ENCODE measurements at regions of chr2 and their contacts with region 1.

Region 1: DNA sequence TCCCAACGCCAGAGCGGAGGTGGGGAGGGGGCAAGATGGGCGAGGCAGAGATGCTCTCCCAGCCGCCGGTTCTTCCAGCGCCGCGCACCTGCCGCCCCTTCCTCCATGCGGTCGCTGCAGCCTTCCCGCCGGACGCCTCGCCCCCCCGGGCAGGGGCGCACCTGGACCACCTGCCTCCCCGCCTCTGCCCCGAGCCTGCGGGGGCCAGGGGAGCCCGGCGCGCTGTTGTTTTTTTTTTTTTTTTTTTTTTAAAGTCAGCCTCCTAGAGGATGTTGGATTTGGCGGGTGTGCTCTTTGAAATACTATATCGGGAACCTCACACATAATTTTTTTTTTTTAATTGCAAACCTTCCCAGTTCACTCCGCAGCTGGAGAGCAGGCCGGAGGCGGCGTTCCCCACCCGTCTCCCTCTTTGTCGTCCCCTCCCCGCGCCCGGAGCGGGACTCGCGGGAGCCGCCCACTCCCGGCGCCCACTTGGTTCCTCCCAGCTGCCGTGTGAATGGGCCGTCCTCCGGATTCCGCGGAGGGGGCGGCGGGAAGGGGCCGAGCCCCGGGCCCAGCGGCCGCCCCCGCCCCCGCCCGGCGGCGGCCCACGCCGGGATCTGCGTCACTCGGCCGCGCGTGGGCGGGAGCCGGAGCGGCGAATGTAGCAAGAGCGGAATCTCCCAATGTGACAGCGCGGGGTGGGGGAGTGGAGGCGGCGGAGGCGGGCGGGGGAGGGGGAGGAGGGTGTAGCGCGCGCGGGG is 421 bp upstream of the NAB1 start:
- DNase-seq: peak; percentile 96
- ATAC-seq: peak; percentile 96

Region 2: GRCh38 chr2:190578158-190579057 is 70.1 kb before region 1 on chr2:
- intact Hi-C with region 1: loop called (anchors 5 kb)
- DNase-seq: no peak
- ATAC-seq: peak; percentile 64

Region 3: DNA sequence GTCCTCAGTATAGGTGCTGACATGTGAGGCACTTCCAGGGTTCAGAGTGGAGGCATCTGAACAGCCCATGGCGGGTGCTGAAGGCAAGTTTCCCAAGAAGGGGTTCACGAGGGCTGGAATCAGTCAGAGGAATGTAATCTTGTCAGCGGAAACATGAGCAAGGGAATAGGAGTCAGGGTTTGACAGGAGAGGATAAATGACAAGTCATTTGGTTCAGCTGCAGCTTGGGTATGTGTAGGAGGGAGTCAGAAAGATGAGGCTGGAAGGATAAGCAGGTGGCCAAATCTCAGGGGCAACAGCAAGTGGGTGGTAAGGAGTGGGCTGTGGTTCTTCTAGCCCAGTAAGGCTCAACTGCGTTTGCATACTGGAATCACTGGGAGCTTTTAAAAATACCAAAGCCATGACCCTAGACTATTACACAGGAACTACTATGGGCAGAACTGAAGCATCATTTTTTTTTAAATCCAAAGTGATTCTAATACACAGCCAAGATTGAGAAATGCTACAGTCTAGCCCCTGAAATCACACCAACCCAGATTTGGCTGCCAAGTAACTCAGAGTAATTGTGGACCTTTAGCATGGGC is 41.4 kb before region 1 on chr2:
- intact Hi-C with region 1: no loop called
- DNase-seq: no peak
- ATAC-seq: peak; percentile 57

Region 4: DNA sequence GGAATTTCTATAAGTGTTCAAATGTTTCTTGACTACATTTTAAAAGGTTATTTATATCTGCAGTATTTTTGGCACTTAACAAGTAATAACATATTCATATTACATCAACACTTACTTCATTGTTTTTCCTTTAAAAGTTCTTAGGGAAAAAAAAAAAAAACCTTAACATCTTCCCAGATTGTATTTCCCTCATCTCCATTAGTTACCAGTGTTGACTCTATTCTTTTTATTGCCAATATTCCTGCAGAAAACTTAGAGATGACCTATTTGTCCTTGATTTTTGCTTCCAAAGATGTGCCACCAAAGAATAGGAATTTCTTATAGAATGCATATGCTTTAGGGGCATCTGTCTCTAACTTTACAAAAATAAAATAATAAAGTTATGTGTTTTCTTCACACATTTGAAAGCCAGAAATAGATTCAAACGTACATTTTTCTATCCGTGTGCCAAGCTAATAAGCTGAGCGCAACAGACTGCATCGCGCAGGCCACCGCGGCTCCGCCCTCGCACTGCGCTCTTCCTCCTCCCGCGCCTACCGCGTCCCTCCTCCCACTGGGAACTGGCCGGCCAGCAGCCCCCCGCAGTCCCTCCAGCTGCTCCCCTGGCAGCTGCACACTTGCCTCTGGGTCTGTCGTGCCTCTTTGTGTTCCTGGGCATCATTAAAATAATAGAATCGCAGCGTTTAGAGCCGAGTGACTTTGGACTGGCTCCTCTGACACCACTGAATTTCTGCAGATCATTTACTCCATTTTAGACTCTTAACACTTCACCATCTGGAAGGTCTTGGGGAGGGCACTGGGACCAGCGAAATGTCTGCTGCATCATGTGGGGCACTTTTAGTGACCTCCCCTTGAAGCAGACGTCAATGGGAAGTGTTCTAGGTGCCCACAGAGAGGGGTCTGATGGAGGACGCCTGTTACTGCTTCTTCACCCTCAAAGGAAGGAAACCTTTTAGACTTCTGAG is 20.7 kb before region 1 on chr2:
- intact Hi-C with region 1: loop called (anchors 1 kb)
- DNase-seq: no peak
- ATAC-seq: peak; percentile 78

Region 5: DNA sequence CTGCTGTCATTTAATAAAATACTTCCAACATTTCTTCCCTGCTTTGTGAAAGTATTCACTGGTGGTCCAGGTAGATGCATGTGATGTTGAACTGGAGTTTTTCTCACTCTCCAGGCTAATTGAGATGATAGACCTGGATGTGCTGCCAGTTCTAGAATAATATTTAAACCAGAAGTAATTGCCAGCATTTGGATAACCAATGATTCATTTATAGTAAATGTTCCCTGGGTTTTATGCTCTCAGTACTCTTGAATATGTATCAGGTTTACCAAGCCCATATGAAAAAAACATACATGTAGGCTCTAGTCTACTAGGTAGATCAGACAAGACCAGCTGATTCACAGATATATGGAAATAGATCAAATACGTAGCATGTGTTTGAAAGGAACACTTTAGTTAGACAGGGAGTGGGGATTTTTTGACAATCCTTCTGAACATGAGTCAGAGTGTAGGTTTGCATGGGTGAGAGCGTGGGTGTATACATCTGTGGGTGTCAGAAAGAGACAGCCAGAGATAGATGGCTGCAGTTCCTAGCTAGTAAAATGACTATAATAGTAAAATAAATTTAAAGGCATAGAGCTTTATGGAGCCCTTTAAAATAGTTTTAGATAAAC is 115.5 kb after region 1 on chr2:
- intact Hi-C with region 1: no loop called
- DNase-seq: no peak
- ATAC-seq: no peak

Measured in Right ventricle myocardium inferior (tissue), 1 donor.